Activated T-helper 2 cell treated with anti-CD3 and anti-CD28 coated beads, Interferon-gamma antibody, Interleukin-2, Interleukin-4, amounts not matched to agents 10 μg/mL and 5 μg/mL and 100 μg/mL, durations not matched to agents 14 hours and 24 hours and 36 hours (primary cell): ENCODE measurements at regions of chr5 and their contacts with region 1.

Region 1: GRCh38 chr5:74919487-74919886 is 53.3 kb upstream of the FAM169A start:
- DNase-seq: no peak
- H3K4me3 Mint-ChIP-seq: no peak overlapping the region
- H3K27ac Mint-ChIP-seq: no peak overlapping the region
- H3K4me1 Mint-ChIP-seq: no peaks in the 10 kb centered on the region
- H3K27me3 Mint-ChIP-seq: peaks cover 2% of the 10 kb centered on the region

Region 2: DNA sequence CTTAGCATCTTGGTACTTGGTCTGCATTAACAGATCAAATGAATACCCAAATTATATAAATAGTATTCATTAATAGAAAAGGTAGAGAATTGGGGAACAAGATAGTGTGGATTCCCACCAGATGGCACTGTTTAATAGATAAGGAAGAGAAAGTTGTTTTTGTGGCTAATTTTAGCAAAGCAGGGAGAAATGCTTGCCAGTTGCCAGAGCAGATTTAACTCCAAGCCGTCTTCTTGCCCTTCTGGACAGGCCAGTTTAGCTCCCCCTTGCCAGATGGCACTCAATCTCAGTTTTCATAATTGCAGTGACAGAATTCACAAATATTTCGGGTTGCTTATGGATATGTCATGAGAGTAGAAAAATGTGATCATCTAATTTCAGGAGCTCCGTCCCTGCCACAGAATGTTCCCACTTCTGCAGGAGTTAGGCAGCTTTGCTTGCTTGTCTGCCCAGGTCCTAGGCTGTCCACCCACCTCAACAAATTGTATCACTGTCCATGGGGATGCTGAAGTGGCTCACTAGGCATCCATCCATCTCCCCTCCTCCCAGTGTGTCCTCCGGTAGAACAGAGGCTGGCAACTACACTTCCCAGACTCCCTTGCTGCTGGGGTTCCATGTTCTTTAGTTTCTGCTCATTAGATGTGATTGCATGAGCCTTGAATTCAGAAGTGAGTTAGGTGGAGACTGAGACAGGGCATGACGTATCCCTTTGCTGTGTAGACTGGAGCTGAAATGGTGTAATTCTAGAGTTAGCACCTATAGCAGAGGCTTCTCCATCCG is 246.3 kb before region 1 on chr5:
- intact Hi-C with region 1: loop called (anchors 2 kb)
- DNase-seq: no peak
- H3K4me3 Mint-ChIP-seq: no peak overlapping the region
- H3K27ac Mint-ChIP-seq: no peak overlapping the region
- H3K4me1 Mint-ChIP-seq: no peaks in the 10 kb centered on the region
- H3K27me3 Mint-ChIP-seq: peaks cover 17% of the 10 kb centered on the region

Region 3: DNA sequence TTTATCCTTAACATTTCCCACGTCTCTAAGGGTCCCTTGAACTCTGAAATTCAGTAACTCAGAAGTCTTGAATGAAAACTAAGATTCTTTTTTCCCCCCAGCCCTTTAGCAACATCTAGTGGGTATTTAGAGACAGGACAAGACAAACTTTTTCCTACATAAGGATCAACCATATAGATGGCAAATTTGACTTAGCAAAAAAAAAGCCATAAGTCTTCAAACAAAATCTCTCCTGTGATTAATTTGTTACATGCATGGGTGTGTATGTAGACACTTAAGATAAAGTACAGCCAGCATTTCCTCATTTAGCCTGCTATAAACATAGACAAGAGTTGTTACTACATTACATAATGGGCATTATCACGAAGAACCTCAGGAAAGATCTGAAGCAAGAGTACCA is 346.2 kb after region 1 on chr5:
- intact Hi-C with region 1: loop called (anchors 5 kb)
- DNase-seq: no peak
- H3K4me3 Mint-ChIP-seq: no peak overlapping the region
- H3K27ac Mint-ChIP-seq: no peak overlapping the region
- H3K4me1 Mint-ChIP-seq: no peaks in the 10 kb centered on the region
- H3K27me3 Mint-ChIP-seq: peaks cover 8% of the 10 kb centered on the region